ENCODE measurements at regions of chr3 and their contacts with region 1.

Region 1: GRCh38 chr3:71121429-71122167 is 461.9 kb downstream of the FOXP1 start:
- DNase-seq: no peak
- H3K4me3 Mint-ChIP-seq: no peak overlapping the region
- H3K27ac Mint-ChIP-seq: peak overlapping the region; percentile 39
- H3K4me1 Mint-ChIP-seq: peaks cover 63% of the 10 kb centered on the region
- H3K27me3 Mint-ChIP-seq: no peaks in the 10 kb centered on the region

Region 2: GRCh38 chr3:71103430-71103921 is 18.1 kb before region 1 on chr3:
- intact Hi-C with region 1: loop called (anchors 2 kb)
- DNase-seq: no peak
- H3K4me3 Mint-ChIP-seq: no peak overlapping the region
- H3K27ac Mint-ChIP-seq: no peak overlapping the region
- H3K4me1 Mint-ChIP-seq: peaks cover 61% of the 10 kb centered on the region
- H3K27me3 Mint-ChIP-seq: no peaks in the 10 kb centered on the region

Region 3: GRCh38 chr3:71942432-71943187 is 821.0 kb after region 1 on chr3:
- intact Hi-C with region 1: no loop called
- DNase-seq: no peak
- H3K4me3 Mint-ChIP-seq: no peak overlapping the region
- H3K27ac Mint-ChIP-seq: no peak overlapping the region
- H3K4me1 Mint-ChIP-seq: peaks cover 2% of the 10 kb centered on the region
- H3K27me3 Mint-ChIP-seq: peaks cover 16% of the 10 kb centered on the region

Measured in activated CD4-positive, alpha-beta T cell treated with anti-CD3 and anti-CD28 coated beads, Interleukin-2, amount 10 ng/mL, durations not matched to agents 24 days and 14 days (primary cell).